HAP-1 (cell line): ENCODE measurements at regions of chr4 and their contacts with region 1.

Region 1: GRCh38 chr4:164012396-164013027 is 518.0 kb downstream of the TMA16 start:
- DNase-seq: peak; percentile 66 to 75
- H3K4me3 ChIP-seq: no peak overlapping the region
- H3K4me1 ChIP-seq: no peaks in the 10 kb centered on the region
- H3K27me3 ChIP-seq: no peaks in the 10 kb centered on the region; the same call in none of the 2 replicates

Region 2: DNA sequence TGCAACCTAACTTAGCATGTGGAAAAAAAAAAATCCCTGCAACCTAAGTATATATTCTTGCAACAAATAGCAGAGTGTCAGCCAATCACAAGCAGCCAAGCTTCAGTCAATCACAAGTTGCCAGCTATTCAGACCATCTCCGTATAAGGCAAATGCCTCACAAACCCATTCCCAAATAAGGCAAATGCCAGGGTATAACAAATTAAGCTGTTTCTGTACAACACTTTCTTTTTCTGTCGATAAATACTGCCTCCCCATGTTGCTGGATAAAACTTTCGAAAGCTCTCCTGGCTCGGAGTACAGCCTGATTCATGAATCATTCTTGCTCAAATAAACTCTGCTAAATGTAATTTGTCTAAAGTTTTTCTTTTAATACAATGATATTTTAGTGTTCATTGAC is 280.7 kb after region 1 on chr4:
- in situ Hi-C with region 1: no loop called
- DNase-seq: no peak
- H3K4me3 ChIP-seq: no peak overlapping the region
- H3K4me1 ChIP-seq: no peaks in the 10 kb centered on the region
- H3K27me3 ChIP-seq: no peaks in the 10 kb centered on the region

Region 3: GRCh38 chr4:164731827-164732474 is 719.4 kb after region 1 on chr4:
- in situ Hi-C with region 1: loop called (anchors 25 kb)
- DNase-seq: peak; percentile 58 to 80
- H3K4me3 ChIP-seq: no peak overlapping the region
- H3K4me1 ChIP-seq: peaks cover 3% of the 10 kb centered on the region
- H3K27me3 ChIP-seq: no peaks in the 10 kb centered on the region